Calu3 (cell line): ENCODE measurements at regions of chr4 and their contacts with region 1.

Region 1: DNA sequence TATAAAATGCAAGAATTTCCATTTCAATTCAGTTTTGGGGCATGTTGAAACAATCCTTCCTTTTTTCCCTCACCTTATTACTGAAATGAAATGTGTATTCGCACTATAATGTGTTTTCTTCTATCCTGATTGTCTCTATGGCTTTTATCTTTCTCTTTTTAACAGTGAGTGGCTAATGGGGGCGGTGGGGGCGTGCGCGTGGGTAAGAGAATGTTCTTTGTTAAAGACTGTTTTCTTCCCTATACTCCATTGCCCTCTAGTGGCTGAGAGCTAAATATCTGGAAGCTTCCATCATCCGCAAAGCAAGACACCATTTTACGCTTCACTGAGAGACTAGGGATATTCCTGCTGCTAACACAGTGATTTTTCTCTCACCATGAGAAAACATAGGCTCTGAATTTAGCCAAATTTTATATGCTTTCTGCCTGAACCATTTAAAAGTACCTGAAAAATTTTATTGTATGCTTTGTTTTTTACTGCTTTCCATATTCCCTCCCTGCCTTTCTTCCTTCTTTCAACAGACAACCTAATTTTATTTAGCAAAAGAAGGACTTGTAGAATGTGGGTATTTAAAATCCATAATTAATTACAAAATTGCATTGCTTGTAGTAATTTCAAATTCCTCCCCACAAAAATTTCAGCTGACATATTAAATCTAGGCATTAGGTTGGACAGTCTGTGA is 194.0 kb downstream of the GASK1B start:
- DNase-seq: peak; percentile 29
- H3K4me3 Mint-ChIP-seq: peak overlapping the region; percentile 59
- H3K27ac Mint-ChIP-seq: peak overlapping the region; percentile 90
- H3K4me1 Mint-ChIP-seq: no peaks in the 10 kb centered on the region
- H3K27me3 Mint-ChIP-seq: no peaks in the 10 kb centered on the region
- CTCF ChIP-seq: peak; percentile 57

Region 2: DNA sequence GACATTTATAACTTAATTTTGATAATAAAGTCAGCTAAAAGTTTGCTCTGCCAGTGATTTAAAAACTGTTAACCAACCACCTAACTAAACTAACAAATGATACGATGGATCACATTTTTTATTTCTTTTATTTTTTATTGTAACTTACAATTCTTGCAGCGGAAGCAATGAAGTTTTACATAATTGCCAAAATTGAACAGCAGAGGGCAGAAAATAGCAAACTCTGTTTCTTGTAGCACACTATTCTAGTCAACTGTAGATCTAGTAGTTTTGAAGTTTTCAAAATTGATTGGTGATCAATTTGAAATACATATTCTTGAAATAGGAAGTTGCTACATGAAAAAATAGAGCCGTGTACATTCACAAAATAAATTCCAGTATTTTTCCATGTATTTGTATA is 761.1 kb before region 1 on chr4:
- CTCF ChIA-PET with region 1: no interaction called
- intact Hi-C with region 1: loop called (anchors 1 kb)
- DNase-seq: peak; percentile 3
- H3K4me3 Mint-ChIP-seq: no peak overlapping the region
- H3K27ac Mint-ChIP-seq: no peak overlapping the region
- H3K4me1 Mint-ChIP-seq: no peaks in the 10 kb centered on the region
- H3K27me3 Mint-ChIP-seq: no peaks in the 10 kb centered on the region
- CTCF ChIP-seq: peak; percentile 41

Region 3: GRCh38 chr4:157514711-157515110 is 464.1 kb before region 1 on chr4:
- CTCF ChIA-PET with region 1: no interaction called
- intact Hi-C with region 1: loop called (anchors 2 kb)
- DNase-seq: no peak
- H3K4me3 Mint-ChIP-seq: no peak overlapping the region
- H3K27ac Mint-ChIP-seq: no peak overlapping the region
- H3K4me1 Mint-ChIP-seq: no peaks in the 10 kb centered on the region
- H3K27me3 Mint-ChIP-seq: no peaks in the 10 kb centered on the region
- CTCF ChIP-seq: no peak

Region 4: GRCh38 chr4:157591245-157591644 is 387.6 kb before region 1 on chr4:
- CTCF ChIA-PET with region 1: no interaction called
- intact Hi-C with region 1: loop called (anchors 10 kb)
- DNase-seq: no peak
- H3K4me3 Mint-ChIP-seq: no peak overlapping the region
- H3K27ac Mint-ChIP-seq: no peak overlapping the region
- H3K4me1 Mint-ChIP-seq: no peaks in the 10 kb centered on the region
- H3K27me3 Mint-ChIP-seq: no peaks in the 10 kb centered on the region
- CTCF ChIP-seq: no peak